ENCODE measurements at regions of chr11 and their contacts with region 1.

Region 1: DNA sequence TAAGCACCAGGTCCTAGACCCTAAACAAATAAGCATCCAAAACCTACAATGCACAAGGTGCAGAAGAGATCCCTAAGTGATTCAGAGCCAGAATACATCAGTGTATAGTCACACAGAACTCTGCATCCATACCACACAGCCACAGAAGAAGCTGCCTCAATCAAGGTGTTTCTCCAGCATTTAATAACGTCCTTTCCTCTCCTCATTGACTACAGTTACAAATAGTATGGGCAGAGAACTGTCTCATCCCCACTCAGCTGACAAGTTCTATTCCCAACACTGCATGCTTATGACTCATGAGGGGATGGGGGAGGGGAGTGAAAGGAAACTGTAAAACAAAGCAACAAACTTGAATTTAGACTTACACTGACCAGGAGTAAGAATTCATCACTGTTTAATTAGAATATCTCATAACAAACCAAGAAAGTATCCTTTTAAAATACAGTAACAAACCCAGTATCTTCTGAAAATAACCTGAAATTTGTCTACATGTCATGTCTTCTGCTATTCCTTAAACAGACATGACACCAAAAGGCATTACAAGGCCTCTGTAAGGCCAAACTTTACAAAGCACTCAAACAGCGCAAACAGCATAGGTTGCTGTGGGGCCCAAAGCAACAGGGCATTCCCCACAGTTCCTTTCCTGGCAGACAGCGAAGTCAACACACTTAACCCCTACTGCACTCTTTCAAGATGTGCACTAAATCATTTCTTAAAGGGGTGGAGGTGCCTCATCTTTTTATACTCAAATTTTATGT is 29.3 kb downstream of the CELF1 start:
- DNase-seq: peak in 32 of 35 experiments; percentile 23 to 78 (median 54)
- ATAC-seq: peak; percentile 69 to 90 (median 72)
- H3K4me3 ChIP-seq: peak overlapping the region in 1 of 2 donors; percentile 23
- H3K4me3 Mint-ChIP-seq: peak overlapping the region; percentile 56 to 62 (median 60)
- H3K27ac ChIP-seq: peak overlapping the region; percentile 69
- H3K27ac Mint-ChIP-seq: peak overlapping the region; percentile 73 to 87
- H3K4me1 ChIP-seq: peaks cover 36 to 46% of the 10 kb centered on the region in 2 experiments
- H3K4me1 Mint-ChIP-seq: peaks cover 50 to 89% (median 82%) of the 10 kb centered on the region in 3 donors
- H3K27me3 ChIP-seq: no peaks in the 10 kb centered on the region
- H3K27me3 Mint-ChIP-seq: no peaks in the 10 kb centered on the region

Region 2: DNA sequence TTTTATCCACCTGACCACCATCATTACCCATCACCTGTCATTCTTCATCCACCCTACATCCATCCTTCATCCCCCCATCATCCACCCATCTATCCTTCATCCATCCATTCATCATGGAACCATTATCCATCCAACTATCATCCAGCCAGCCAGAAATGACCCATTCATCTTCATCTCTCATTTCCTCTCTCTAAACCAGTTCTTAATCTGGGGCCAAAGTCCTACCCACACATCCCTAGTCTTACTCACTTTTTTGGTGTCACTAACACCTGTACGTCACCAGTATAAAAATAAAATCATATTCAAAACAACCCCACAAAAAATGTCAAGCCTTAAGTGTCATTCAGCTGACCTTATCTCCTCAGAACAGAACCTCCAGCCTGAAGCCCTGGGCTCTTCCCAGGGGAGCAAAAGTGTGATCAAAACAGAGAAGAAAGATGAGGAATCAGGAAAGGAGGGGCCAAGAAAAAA is 157.6 kb before region 1 on chr11:
- CTCF ChIA-PET with region 1: no interaction called
- POLR2A ChIA-PET with region 1: interaction called in 1 of 2 experiments, 11 read pairs
- DNase-seq: no peak
- ATAC-seq: no peak
- H3K4me3 ChIP-seq: no peak overlapping the region
- H3K4me3 Mint-ChIP-seq: no peak overlapping the region
- H3K27ac ChIP-seq: no peak overlapping the region
- H3K27ac Mint-ChIP-seq: no peak overlapping the region
- H3K4me1 ChIP-seq: no peaks in the 10 kb centered on the region
- H3K4me1 Mint-ChIP-seq: peaks cover 3 to 10% (median 5%) of the 10 kb centered on the region in 3 donors
- H3K27me3 ChIP-seq: peaks cover 0 to 5% of the 10 kb centered on the region in 2 experiments
- H3K27me3 Mint-ChIP-seq: peaks cover 0 to 3% of the 10 kb centered on the region in 2 donors

Region 3: DNA sequence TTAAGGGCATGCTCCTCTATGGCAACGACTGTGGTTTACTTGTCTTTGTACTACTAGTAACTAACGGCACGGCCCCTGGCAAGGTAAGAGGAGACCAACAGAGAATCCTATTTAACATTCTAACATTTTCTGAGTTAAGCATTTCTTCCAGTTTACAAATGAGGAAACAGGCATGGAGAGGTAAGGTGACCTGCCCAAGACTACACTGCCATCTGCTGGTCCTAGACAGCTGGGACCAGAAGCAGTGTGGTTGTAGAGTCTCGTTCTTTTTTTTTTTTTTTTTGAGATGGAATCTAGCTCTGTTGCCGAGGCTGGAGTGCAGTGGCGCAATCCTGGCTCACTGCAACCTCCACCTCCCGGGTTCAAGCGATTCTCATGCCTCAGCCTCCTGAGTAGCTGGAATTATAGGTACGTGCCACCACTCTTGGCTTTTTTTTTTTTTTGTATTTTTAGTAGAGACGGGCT is 69.4 kb before region 1 on chr11:
- CTCF ChIA-PET with region 1: no interaction called
- POLR2A ChIA-PET with region 1: no interaction called
- DNase-seq: peak; percentile 21 to 83 (median 61)
- ATAC-seq: peak; percentile 84 to 95 (median 88)
- H3K4me3 ChIP-seq: no peak overlapping the region
- H3K4me3 Mint-ChIP-seq: no peak overlapping the region
- H3K27ac ChIP-seq: no peak overlapping the region
- H3K27ac Mint-ChIP-seq: no peak overlapping the region
- H3K4me1 ChIP-seq: peaks cover 0 to 4% of the 10 kb centered on the region in 2 experiments
- H3K4me1 Mint-ChIP-seq: peaks cover 4 to 5% (median 5%) of the 10 kb centered on the region in 3 donors
- H3K27me3 ChIP-seq: no peaks in the 10 kb centered on the region
- H3K27me3 Mint-ChIP-seq: no peaks in the 10 kb centered on the region

Region 4: DNA sequence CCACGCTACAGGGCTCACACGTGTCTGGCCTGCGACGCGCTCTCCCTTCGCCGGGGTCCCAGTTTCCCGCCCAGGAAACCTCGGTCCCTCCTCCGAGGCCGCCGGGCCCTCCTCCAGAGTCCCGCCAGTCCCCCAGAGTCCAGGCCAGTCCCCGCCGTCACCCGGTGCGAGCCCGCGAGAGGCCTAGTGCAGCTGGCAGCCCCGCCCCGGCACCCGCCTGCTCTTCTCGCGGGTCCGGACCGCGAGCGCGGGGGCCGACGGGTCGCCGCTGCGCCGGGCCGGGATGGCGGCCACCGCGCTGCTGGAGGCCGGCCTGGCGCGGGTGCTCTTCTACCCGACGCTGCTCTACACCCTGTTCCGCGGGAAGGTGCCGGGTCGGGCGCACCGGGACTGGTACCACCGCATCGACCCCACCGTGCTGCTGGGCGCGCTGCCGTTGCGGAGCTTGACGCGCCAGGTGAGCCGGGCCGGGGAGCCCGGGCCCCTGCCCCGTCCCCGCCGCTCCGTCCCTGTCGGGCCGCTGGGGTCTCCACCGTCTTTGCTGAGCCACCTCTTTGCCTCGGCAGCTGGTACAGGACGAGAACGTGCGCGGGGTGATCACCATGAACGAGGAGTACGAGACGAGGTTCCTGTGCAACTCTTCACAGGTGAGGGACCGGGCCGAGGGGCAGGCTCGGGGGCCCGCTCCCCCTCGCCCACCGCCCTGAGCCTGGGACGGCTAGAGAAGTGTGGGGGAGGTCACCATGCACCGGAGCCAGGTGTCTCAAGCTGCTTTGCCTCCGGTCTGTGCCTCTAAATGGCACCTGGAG is 41.9 kb after region 1 on chr11 and contains the start of gene PTPMT1:
- CTCF ChIA-PET with region 1: no interaction called
- POLR2A ChIA-PET with region 1: no interaction called
- DNase-seq: peak; percentile 12 to 71 (median 51)
- ATAC-seq: peak; percentile 87 to 93 (median 90)
- H3K4me3 ChIP-seq: peak within 1 kb of the TSS; percentile 83 to 91
- H3K4me3 Mint-ChIP-seq: peak within 1 kb of the TSS; percentile 77 to 83 (median 79)
- H3K27ac ChIP-seq: peak within 1 kb of the TSS; percentile 81
- H3K27ac Mint-ChIP-seq: peak within 1 kb of the TSS; percentile 76 to 85
- H3K4me1 ChIP-seq: peaks cover 4 to 24% of the 10 kb centered on the region in 2 experiments
- H3K4me1 Mint-ChIP-seq: peaks cover 8 to 24% (median 22%) of the 10 kb centered on the region in 3 donors
- H3K27me3 ChIP-seq: no peaks in the 10 kb centered on the region
- H3K27me3 Mint-ChIP-seq: no peaks in the 10 kb centered on the region
- total RNA-seq, gene PTPMT1: 14.9 to 25.3 (median 25.0) TPM

Region 5: DNA sequence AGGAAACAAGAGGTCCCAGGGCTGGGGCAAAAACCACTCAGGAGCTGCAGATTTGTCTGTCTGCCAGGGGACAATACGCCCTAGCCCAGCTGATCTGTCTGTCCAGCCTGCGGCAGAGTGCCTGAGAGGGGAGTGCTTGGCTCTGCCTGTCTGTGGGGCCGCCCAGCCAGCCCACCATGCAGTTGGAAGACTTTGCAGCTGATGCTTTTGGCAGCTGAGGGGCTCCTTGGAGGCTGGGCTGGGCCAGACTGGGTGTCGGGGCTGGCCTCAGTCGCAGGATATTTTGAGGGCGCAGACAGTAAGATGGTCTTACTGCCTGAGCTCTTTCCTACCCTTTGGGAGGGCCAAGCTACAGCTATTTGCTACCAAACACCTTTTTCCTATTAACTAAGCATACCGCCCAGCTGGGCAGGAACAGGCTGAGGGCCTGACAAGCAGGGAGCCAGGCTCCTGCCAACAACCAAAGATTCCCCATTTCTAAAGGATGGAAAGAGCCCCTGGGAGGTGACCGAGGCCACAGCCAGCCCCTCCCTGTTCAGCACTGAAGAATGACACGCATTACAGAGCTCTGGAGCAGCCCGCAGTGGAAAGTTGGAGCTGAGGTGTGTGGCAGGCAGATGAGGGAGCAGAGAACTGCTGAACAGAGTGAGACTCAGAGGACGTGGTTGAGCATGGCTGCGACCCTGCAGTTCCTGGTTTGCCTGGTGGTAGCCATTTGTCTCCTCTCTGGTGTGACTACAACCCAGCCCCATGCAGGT is 62.6 kb after region 1 on chr11 and contains the start of gene FAM180B:
- CTCF ChIA-PET with region 1: no interaction called
- POLR2A ChIA-PET with region 1: no interaction called
- DNase-seq: no peak
- ATAC-seq: no peak
- H3K4me3 ChIP-seq: no peak within 1 kb of the TSS
- H3K4me3 Mint-ChIP-seq: no peak within 1 kb of the TSS
- H3K27ac ChIP-seq: no peak within 1 kb of the TSS
- H3K27ac Mint-ChIP-seq: no peak within 1 kb of the TSS
- H3K4me1 ChIP-seq: no peaks in the 10 kb centered on the region
- H3K4me1 Mint-ChIP-seq: peaks cover 0 to 6% (median 1%) of the 10 kb centered on the region in 3 donors
- H3K27me3 ChIP-seq: no peaks in the 10 kb centered on the region
- H3K27me3 Mint-ChIP-seq: no peaks in the 10 kb centered on the region
- total RNA-seq, gene FAM180B: 0.20 to 0.51 (median 0.28) TPM in 3 of 5 donors, not detected in the others

Measured in T-cell (primary cell).